Activated CD4-positive, alpha-beta T cell treated with anti-CD3 and anti-CD28 coated beads for 36 hours (primary cell): ENCODE measurements at regions of chr22 and their contacts with region 1.

Region 1: DNA sequence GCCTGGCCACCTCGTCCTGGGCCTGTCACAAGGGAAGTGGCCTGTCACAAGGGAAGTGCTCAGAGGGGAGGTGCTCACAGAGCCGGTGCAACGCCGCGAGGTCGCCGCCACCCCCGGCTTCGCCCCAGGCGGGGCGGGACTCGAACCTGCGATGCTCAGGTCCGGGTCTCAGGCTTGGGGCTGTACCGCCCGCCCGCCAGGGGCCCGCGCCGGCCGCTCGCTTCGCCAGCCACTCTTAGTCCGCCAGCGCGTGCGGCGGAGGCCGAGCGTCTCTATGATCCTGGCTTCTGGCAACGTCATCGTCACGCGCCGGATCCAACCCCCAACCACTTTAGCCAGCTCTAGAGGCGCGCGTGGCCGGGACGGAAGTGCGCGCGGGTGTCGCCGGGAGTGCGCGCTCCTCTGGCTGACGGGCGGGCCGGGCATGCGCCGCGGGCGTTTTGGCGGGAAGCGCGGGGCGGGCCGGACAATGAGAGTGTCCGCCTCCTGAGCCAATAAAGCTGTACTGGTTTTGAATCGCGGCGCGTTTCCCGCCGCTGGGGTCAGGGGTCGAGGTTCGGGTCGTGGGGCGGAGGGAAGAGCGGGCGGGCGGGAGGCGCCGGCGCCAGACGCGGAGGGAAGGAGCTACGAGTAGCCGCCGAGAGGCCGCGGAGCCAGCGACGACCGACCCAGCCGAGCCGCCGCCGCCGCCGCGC is at the start of gene TRMT2A:
- DNase-seq: peak; percentile 99
- ATAC-seq: peak; percentile 79
- H3K4me3 Mint-ChIP-seq: peak within 1 kb of the TSS; percentile 94
- H3K27ac Mint-ChIP-seq: peak within 1 kb of the TSS; percentile 91
- H3K4me1 Mint-ChIP-seq: peaks cover 47% of the 10 kb centered on the region
- H3K27me3 Mint-ChIP-seq: no peaks in the 10 kb centered on the region
- total RNA-seq, gene TRMT2A: 84.4 to 85.9 TPM

Region 2: GRCh38 chr22:19432133-19432851 is 684.8 kb before region 1 on chr22 and contains the start of gene MRPL40:
- CTCF ChIA-PET with region 1: no interaction called
- POLR2A ChIA-PET with region 1: no interaction called
- intact Hi-C with region 1: loop called in 1 of 2 experiments (anchors 1 kb)
- DNase-seq: peak; percentile 94
- ATAC-seq: peak; percentile 86
- H3K4me3 Mint-ChIP-seq: peak within 1 kb of the TSS; percentile 75
- H3K27ac Mint-ChIP-seq: peak within 1 kb of the TSS; percentile 96
- H3K4me1 Mint-ChIP-seq: peaks cover 43% of the 10 kb centered on the region
- H3K27me3 Mint-ChIP-seq: no peaks in the 10 kb centered on the region
- total RNA-seq, gene MRPL40: 34.1 to 34.4 TPM

Region 3: DNA sequence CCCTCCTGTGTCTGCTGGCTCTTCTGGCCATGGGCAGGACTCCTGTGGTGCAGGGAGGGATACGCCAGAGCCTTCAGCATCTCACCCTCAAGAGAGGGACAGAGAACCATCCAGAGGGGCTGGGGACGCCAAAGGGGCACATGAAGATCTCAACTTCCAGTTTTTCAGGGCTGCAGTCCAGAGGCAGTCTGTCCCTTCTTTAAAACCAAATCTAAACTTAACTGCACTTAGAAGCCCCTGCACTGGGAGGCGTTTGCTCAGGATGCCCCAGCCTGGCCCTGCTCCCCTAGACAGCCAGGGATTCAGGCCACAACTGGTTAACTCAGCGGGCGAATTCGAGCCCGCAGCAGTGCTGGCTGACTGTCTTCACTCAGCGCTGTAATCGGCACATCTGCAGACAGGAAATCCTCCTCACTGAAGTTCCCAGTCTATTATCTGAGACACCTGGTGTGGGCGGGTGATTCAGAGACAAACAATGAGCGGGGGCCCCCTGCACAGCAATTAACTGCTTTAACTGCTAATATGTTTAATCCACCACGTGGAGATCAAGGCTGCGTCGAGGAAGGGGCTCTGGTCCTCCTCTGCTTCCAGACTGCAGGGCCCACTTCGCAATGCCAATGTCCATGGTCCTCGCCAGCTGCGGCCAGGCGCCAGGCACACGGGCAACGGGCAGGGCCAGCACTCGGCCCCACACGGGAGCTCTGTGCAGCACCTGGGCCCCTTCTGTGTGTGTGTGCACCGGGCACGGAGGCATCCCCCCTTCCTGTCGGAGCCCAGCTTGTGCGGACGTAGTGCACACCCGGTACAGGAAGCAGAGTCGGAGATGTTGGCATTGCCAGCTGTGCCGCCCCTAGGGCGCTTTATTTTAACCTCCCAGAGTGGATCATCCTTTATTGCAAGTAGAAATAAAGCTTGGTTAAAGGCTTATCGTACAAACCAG is 225.5 kb before region 1 on chr22:
- CTCF ChIA-PET with region 1: no interaction called
- POLR2A ChIA-PET with region 1: no interaction called
- intact Hi-C with region 1: loop called in 1 of 2 experiments (anchors 5 kb)
- DNase-seq: peak; percentile 92
- ATAC-seq: peak; percentile 75
- H3K4me3 Mint-ChIP-seq: peak overlapping the region; percentile 72
- H3K27ac Mint-ChIP-seq: peak overlapping the region; percentile 95
- H3K4me1 Mint-ChIP-seq: peaks cover 86% of the 10 kb centered on the region
- H3K27me3 Mint-ChIP-seq: no peaks in the 10 kb centered on the region

Region 4: DNA sequence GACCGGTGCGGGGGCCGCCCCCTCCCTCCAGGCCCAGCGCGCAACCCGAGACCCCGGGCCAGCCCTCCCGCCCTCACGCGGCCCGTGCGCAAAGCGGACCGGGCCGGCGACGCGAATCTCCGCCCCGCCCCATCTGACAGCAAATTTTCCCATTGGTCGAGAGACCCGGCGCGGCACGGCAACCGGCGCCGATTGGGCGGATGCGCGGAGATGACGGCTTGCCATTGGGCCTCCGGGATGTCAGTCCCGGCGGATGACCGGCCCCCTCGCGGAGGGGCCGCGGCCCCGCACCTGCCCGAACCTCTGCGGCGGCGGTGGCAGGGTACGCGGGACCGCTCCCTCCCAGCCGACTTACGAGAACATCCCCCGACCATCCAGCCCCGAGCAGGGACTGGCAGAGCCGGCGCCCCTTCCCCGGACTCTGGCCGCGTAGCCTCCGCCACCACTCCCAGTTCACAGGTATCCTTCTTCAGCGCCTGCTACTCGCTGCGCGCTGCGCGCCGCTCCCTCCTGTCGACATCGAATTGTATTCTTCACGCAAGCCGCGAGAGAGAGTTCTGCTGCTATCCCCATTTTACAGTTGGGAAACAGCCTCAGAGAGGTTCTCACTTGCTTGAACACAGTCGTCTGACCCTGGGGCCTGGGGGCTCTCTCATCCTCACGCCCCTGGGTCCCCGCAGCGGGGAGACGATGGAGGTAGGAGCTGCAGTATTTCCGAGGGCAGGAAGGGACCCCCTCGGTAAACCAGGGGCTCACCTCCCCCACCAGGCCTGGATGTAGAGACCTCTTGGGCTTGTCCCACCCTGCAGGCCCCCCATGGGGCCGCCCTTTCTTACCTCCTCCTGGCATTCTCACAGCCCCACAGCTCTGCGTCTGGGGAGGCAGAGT is 100.1 kb before region 1 on chr22 and contains the start of gene ARVCF:
- CTCF ChIA-PET with region 1: no interaction called
- POLR2A ChIA-PET with region 1: interaction called, 3 read pairs
- intact Hi-C with region 1: loop called (anchors 1 to 2 kb)
- DNase-seq: peak; percentile 94
- ATAC-seq: peak; percentile 72
- H3K4me3 Mint-ChIP-seq: peak within 1 kb of the TSS; percentile 78
- H3K27ac Mint-ChIP-seq: peak within 1 kb of the TSS; percentile 25
- H3K4me1 Mint-ChIP-seq: peaks cover 15% of the 10 kb centered on the region
- H3K27me3 Mint-ChIP-seq: peaks cover 6% of the 10 kb centered on the region
- total RNA-seq, gene ARVCF: 1.3 to 2.1 TPM

Region 5: GRCh38 chr22:20130739-20131596 is 13.9 kb after region 1 on chr22:
- CTCF ChIA-PET with region 1: interaction called, 14 read pairs
- POLR2A ChIA-PET with region 1: interaction called, 26 read pairs
- intact Hi-C with region 1: loop called (anchors 1 kb)
- DNase-seq: peak; percentile 81
- ATAC-seq: peak; percentile 52
- H3K4me3 Mint-ChIP-seq: peak overlapping the region; percentile 51
- H3K27ac Mint-ChIP-seq: no peak overlapping the region
- H3K4me1 Mint-ChIP-seq: peaks cover 33% of the 10 kb centered on the region
- H3K27me3 Mint-ChIP-seq: no peaks in the 10 kb centered on the region

Region 6: DNA sequence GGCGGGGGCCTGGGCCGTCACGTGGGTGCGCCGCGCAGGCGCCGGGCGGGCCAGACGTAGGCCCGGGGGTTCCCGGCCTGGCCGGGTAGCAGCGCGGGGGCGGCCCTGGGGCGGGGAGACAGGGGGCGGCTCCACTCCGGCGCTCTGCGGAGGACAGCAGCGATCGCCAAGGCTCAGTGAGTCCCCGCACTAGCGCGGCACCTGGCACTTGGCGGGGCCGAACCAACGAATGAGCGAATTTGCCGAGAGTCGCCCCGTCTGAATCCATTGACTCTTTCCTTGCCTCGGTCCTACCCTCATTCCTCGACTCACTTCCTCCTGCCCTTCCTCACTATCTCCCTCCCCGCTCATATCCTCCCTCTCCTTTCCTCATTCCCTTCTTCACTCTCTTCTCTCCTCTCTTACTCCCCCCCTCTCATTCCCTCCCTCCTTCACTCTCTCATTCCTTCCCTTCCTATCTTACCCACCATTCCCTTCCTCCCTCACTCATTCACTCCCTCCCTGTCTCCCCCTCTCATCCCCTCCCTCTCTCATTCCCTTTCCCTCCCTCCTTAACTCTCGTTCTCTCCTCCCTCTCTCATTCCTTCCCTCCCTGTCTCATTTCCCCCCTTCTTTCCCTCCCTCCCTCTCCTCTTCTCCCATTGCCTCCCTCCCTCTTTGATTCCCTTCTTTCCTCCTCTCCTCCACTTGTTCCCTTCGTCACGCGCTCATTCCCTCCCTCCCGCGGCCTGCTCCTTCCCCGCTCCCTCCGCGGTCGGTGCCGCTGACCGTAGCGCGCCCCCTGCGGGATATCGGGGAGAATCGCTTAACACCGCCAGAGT is 379.0 kb after region 1 on chr22:
- CTCF ChIA-PET with region 1: no interaction called
- POLR2A ChIA-PET with region 1: no interaction called
- intact Hi-C with region 1: loop called in 1 of 2 experiments (anchors 1 kb)
- DNase-seq: peak; percentile 96
- ATAC-seq: peak; percentile 95
- H3K4me3 Mint-ChIP-seq: peak overlapping the region; percentile 76
- H3K27ac Mint-ChIP-seq: peak overlapping the region; percentile 70
- H3K4me1 Mint-ChIP-seq: peaks cover 29% of the 10 kb centered on the region
- H3K27me3 Mint-ChIP-seq: no peaks in the 10 kb centered on the region

Region 7: GRCh38 chr22:21587803-21588611 is 1470.9 kb after region 1 on chr22:
- CTCF ChIA-PET with region 1: no interaction called
- POLR2A ChIA-PET with region 1: no interaction called
- intact Hi-C with region 1: loop called in 1 of 2 experiments (anchors 5 kb)
- DNase-seq: peak; percentile 79
- ATAC-seq: peak; percentile 97
- H3K4me3 Mint-ChIP-seq: peak overlapping the region; percentile 12
- H3K27ac Mint-ChIP-seq: peak overlapping the region; percentile 88
- H3K4me1 Mint-ChIP-seq: peaks cover 69% of the 10 kb centered on the region
- H3K27me3 Mint-ChIP-seq: no peaks in the 10 kb centered on the region